HepG2 (cell line): ENCODE measurements at regions of chr9 and their contacts with region 1.

Region 1: GRCh38 chr9:81379655-81380054 is 309.7 kb downstream of the TLE1 start:
- DNase-seq: no peak
- ATAC-seq: no peak
- H3K4me3 ChIP-seq: no peak overlapping the region
- H3K27ac ChIP-seq: no peak overlapping the region
- H3K4me1 ChIP-seq: no peaks in the 10 kb centered on the region
- H3K27me3 ChIP-seq: peaks cover 1 to 5% of the 10 kb centered on the region in 2 experiments; a peak in 1 of 5 replicates
- CTCF ChIP-seq: no peak
- EP300 ChIP-seq: no peak
- POLR2A ChIP-seq: no peak
- RAD21 ChIP-seq: no peak

Region 2: GRCh38 chr9:81759668-81760215 is 380.1 kb after region 1 on chr9:
- CTCF ChIA-PET with region 1: no interaction called
- POLR2A ChIA-PET with region 1: no interaction called
- in situ Hi-C with region 1: no loop called
- intact Hi-C with region 1: loop called (anchors 5 kb)
- DNase-seq: peak; percentile 53
- ATAC-seq: peak; percentile 47; the same call in 1 of the 3 replicates
- H3K4me3 ChIP-seq: no peak overlapping the region
- H3K27ac ChIP-seq: no peak overlapping the region
- H3K4me1 ChIP-seq: no peaks in the 10 kb centered on the region
- H3K27me3 ChIP-seq: peaks cover 0 to 3% of the 10 kb centered on the region in 2 experiments; a peak in 1 of 5 replicates
- CTCF ChIP-seq: no peak
- EP300 ChIP-seq: peak in 1 of 2 experiments; percentile 28; a peak in 1 of 4 replicates
- POLR2A ChIP-seq: no peak
- RAD21 ChIP-seq: no peak